Transverse colon (tissue), 4 donors: ENCODE measurements at regions of chr1 and their contacts with region 1.

Region 1: DNA sequence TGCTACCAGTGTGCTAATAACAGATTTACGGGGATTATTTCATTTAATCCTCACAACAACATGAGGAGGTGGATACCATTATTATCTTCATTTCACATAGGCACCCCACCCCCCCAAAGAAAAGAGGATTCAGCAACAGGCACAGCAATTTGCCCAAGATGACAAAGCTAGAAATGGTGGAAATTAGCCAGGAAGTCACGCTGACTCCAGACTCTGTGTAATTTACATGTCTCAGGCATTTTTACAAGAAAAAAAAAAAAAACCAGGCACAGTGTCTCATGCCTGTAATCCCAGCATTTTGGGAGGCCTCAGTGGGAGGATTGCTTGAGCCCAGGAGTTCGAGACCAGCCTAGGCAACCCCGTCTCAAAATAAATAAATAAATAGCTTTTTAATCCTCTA is 37.5 kb upstream of the PRDM2 start:
- DNase-seq: peak; percentile 14
- H3K4me3 ChIP-seq: no peak overlapping the region
- H3K27ac ChIP-seq: peak overlapping the region in 3 of 4 donors; percentile 4 to 35 (median 30)
- H3K4me1 ChIP-seq: peaks cover 0 to 4% (median 0%) of the 10 kb centered on the region in 4 donors
- H3K27me3 ChIP-seq: peaks cover 7% of the 10 kb centered on the region
- CTCF ChIP-seq: no peak
- EP300 ChIP-seq: no peak
- POLR2A ChIP-seq: no peak

Region 2: GRCh38 chr1:13725714-13726175 is 63.3 kb after region 1 on chr1:
- in situ Hi-C with region 1: loop called in 2 of 4 experiments (anchors 5 kb)
- intact Hi-C with region 1: no loop called
- DNase-seq: peak; percentile 59
- H3K4me3 ChIP-seq: no peak overlapping the region
- H3K27ac ChIP-seq: no peak overlapping the region
- H3K4me1 ChIP-seq: peaks cover 0 to 8% (median 3%) of the 10 kb centered on the region in 4 donors
- H3K27me3 ChIP-seq: no peaks in the 10 kb centered on the region
- CTCF ChIP-seq: peak; percentile 38 to 67 (median 51)
- EP300 ChIP-seq: no peak
- POLR2A ChIP-seq: no peak

Region 3: GRCh38 chr1:13813398-13814012 is 151.0 kb after region 1 on chr1:
- in situ Hi-C with region 1: loop called in 1 of 4 experiments (anchors 25 kb)
- intact Hi-C with region 1: loop called (anchors 10 kb)
- DNase-seq: no peak
- H3K4me3 ChIP-seq: no peak overlapping the region
- H3K27ac ChIP-seq: no peak overlapping the region
- H3K4me1 ChIP-seq: peaks cover 0 to 7% (median 0%) of the 10 kb centered on the region in 4 donors
- H3K27me3 ChIP-seq: no peaks in the 10 kb centered on the region
- CTCF ChIP-seq: peak; percentile 17 to 48 (median 36)
- EP300 ChIP-seq: no peak
- POLR2A ChIP-seq: no peak

Region 4: DNA sequence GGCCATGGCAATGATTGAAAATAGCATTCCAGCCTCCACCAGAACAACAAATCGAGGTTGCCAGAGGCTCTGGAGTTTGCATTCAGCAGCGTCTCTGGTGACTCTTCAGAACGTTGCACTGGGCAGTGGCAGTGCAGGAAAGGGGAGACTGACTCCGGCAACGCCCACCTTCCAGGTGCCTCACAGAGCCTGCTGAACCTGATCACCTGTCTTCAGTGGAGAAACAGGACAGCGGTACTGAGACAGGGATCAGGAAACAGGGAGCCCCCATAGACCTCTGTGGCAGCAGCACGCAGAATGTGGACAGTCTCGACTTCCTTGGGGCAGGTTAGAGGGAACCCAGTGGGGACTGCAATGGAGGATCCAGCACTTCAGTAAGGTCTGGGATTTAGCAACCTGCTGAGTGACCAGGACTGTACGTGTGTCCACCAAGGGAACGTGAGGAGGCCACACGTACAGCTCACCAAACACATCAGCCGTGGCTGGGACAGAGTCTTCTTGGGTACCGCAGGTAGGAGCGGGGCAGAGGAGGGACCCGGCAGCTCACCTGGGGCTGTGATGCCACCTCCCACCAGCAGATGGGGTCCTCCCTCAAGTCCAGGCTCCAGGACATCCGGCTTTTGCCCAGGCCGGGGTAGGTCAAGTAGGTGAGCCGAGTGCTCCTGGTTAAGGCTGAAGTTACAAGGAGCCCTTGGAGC is 166.1 kb after region 1 on chr1:
- in situ Hi-C with region 1: loop called in 2 of 4 experiments (anchors 10 to 25 kb)
- intact Hi-C with region 1: no loop called
- DNase-seq: peak; percentile 87
- H3K4me3 ChIP-seq: peak overlapping the region in 2 of 4 donors; percentile 15 to 22
- H3K27ac ChIP-seq: peak overlapping the region; percentile 39 to 83 (median 51)
- H3K4me1 ChIP-seq: peaks cover 0 to 26% (median 19%) of the 10 kb centered on the region in 4 donors
- H3K27me3 ChIP-seq: peaks cover 4% of the 10 kb centered on the region
- CTCF ChIP-seq: peak; percentile 55 to 94 (median 80)
- EP300 ChIP-seq: no peak
- POLR2A ChIP-seq: no peak

Region 5: GRCh38 chr1:13871886-13872285 is 209.4 kb after region 1 on chr1:
- in situ Hi-C with region 1: no loop called
- intact Hi-C with region 1: no loop called
- DNase-seq: no peak
- H3K4me3 ChIP-seq: no peak overlapping the region
- H3K27ac ChIP-seq: no peak overlapping the region
- H3K4me1 ChIP-seq: no peaks in the 10 kb centered on the region
- H3K27me3 ChIP-seq: peaks cover 3% of the 10 kb centered on the region
- CTCF ChIP-seq: no peak
- EP300 ChIP-seq: no peak
- POLR2A ChIP-seq: no peak

Region 6: GRCh38 chr1:13950637-13951036 is 288.1 kb after region 1 on chr1:
- in situ Hi-C with region 1: loop called (anchors 5 to 25 kb)
- intact Hi-C with region 1: no loop called
- DNase-seq: no peak
- H3K4me3 ChIP-seq: no peak overlapping the region
- H3K27ac ChIP-seq: no peak overlapping the region
- H3K4me1 ChIP-seq: no peaks in the 10 kb centered on the region
- H3K27me3 ChIP-seq: no peaks in the 10 kb centered on the region
- CTCF ChIP-seq: peak in 1 of 5 experiments; percentile 6
- EP300 ChIP-seq: no peak
- POLR2A ChIP-seq: no peak

Region 7: DNA sequence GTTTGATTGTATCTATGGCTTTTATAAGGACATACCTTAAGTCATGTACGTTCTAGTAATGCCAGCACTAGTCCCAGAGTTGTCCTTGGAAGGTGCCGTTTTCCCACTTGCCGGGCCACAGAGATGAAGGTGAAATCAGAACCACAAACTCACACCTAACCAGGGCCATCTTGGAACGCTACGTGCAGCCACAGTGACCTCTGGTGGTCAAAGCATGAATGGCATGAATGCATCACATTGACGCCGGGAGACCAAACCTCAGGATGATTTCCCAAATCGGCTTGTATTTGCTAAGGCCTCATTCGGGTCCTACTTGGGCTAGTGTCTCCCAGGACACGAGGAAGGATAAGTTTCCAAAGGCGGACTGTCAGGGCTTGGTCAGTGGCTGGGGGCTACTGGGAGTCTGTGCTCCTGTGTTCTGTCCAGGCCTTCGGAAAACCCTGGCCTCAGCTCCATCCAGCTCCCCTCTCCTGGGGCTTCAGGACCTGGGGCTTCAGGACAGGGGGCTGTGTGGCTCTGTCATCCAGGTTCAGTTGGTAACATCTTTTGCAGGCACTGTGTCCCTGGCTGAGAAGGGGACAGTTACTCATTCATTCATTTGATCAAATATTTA is 298.0 kb after region 1 on chr1:
- in situ Hi-C with region 1: loop called (anchors 5 to 25 kb)
- intact Hi-C with region 1: loop called (anchors 5 kb)
- DNase-seq: peak; percentile 73
- H3K4me3 ChIP-seq: no peak overlapping the region
- H3K27ac ChIP-seq: no peak overlapping the region
- H3K4me1 ChIP-seq: no peaks in the 10 kb centered on the region
- H3K27me3 ChIP-seq: no peaks in the 10 kb centered on the region
- CTCF ChIP-seq: peak; percentile 94 to 98 (median 97)
- EP300 ChIP-seq: no peak
- POLR2A ChIP-seq: no peak